Colonic mucosa (tissue), 4 donors: ENCODE measurements at regions of chr3 and their contacts with region 1.

Region 1: GRCh38 chr3:189961525-189962161 is 159.1 kb downstream of the P3H2 start:
- DNase-seq: peak; percentile 82
- H3K4me3 ChIP-seq: no peak overlapping the region
- H3K27ac ChIP-seq: no peak overlapping the region
- H3K4me1 ChIP-seq: no peaks in the 10 kb centered on the region
- H3K27me3 ChIP-seq: no peaks in the 10 kb centered on the region
- CTCF ChIP-seq: peak; percentile 75

Region 2: GRCh38 chr3:189927975-189928895 is 33.4 kb before region 1 on chr3:
- intact Hi-C with region 1: no loop called
- DNase-seq: no peak
- H3K4me3 ChIP-seq: no peak overlapping the region
- H3K27ac ChIP-seq: no peak overlapping the region
- H3K4me1 ChIP-seq: no peaks in the 10 kb centered on the region
- H3K27me3 ChIP-seq: no peaks in the 10 kb centered on the region
- CTCF ChIP-seq: no peak

Region 3: GRCh38 chr3:190321789-190322603 is 360.4 kb after region 1 on chr3 and contains the start of gene CLDN1:
- intact Hi-C with region 1: loop called (anchors 2 kb)
- DNase-seq: peak; percentile 84
- H3K4me3 ChIP-seq: peak within 1 kb of the TSS; percentile 52
- H3K27ac ChIP-seq: no peak within 1 kb of the TSS
- H3K4me1 ChIP-seq: no peaks in the 10 kb centered on the region
- H3K27me3 ChIP-seq: no peaks in the 10 kb centered on the region
- CTCF ChIP-seq: peak; percentile 92
- total RNA-seq, gene CLDN1: 2.2 to 2.4 TPM